GM10248 (cell line): ENCODE measurements at regions of chr4 and their contacts with region 1.

Region 1: GRCh38 chr4:40924096-40924792 is 174.5 kb downstream of the NSUN7 start:
- DNase-seq: peak; percentile 80
- CTCF ChIP-seq: peak; percentile 53

Region 2: GRCh38 chr4:40607221-40607620 is 317.0 kb before region 1 on chr4:
- CTCF ChIA-PET with region 1: no interaction called
- POLR2A ChIA-PET with region 1: no interaction called
- DNase-seq: no peak
- CTCF ChIP-seq: no peak

Region 3: GRCh38 chr4:40718586-40718985 is 205.7 kb before region 1 on chr4:
- CTCF ChIA-PET with region 1: no interaction called
- POLR2A ChIA-PET with region 1: no interaction called
- DNase-seq: no peak
- CTCF ChIP-seq: no peak

Region 4: GRCh38 chr4:40887288-40888131 is 36.7 kb before region 1 on chr4:
- CTCF ChIA-PET with region 1: interaction called, 10 read pairs
- POLR2A ChIA-PET with region 1: no interaction called
- DNase-seq: no peak
- CTCF ChIP-seq: no peak

Region 5: DNA sequence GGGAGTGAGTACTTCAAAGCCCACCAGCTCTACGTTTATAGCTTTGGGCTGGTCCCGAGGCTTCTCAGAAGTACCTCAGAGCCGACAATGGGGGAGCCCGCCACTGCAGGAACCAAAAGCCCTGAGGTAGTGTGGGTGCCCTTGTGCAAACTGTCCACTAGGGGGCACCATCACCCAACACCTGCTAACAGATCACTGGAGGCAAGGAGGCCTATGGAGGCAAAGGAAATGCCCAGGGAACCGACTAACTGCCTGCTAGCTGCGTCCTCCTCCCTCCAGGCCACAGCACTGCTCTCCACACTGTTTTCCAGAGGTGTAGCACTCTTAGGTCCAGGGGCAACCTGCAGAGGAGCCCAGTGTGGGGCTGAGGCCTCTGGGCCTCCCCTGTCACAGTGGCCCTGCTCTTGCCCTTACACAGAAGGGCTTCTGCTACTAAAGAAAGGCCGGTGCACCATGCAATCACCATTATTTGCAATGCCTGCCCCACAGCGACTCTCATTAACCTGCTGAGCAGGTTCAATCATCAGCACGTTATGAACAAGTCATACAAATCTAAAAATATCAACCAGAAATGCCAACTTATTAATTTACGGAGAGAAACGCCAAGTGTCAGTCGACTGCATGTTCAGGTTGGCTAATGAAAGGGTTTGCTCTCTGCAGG is 15.4 kb before region 1 on chr4:
- CTCF ChIA-PET with region 1: interaction called, 59 read pairs
- POLR2A ChIA-PET with region 1: no interaction called
- DNase-seq: peak; percentile 85
- CTCF ChIP-seq: peak; percentile 89